CD4-positive, alpha-beta T cell (primary cell): ENCODE measurements at regions of chr7 and their contacts with region 1.

Region 1: GRCh38 chr7:157502701-157503111 is 165.9 kb downstream of the DNAJB6 start:
- DNase-seq: peak; percentile 50 to 95 (median 68)
- ATAC-seq: peak; percentile 93
- H3K4me3 ChIP-seq: peak overlapping the region; percentile 25
- H3K4me3 Mint-ChIP-seq: peak overlapping the region; percentile 87
- H3K27ac ChIP-seq: peak overlapping the region; percentile 55 to 73
- H3K27ac Mint-ChIP-seq: peak overlapping the region; percentile 86
- H3K4me1 ChIP-seq: peaks cover 29% of the 10 kb centered on the region
- H3K4me1 Mint-ChIP-seq: peaks cover 32% of the 10 kb centered on the region
- H3K27me3 ChIP-seq: peaks cover 0 to 2% of the 10 kb centered on the region in 2 experiments
- H3K27me3 Mint-ChIP-seq: no peaks in the 10 kb centered on the region
- CTCF ChIP-seq: no peak

Region 2: GRCh38 chr7:156975620-156976019 is 527.1 kb before region 1 on chr7:
- CTCF ChIA-PET with region 1: no interaction called
- POLR2A ChIA-PET with region 1: no interaction called
- intact Hi-C with region 1: no loop called
- DNase-seq: no peak
- ATAC-seq: no peak
- H3K4me3 ChIP-seq: no peak overlapping the region
- H3K4me3 Mint-ChIP-seq: no peak overlapping the region
- H3K27ac ChIP-seq: no peak overlapping the region
- H3K27ac Mint-ChIP-seq: no peak overlapping the region
- H3K4me1 ChIP-seq: no peaks in the 10 kb centered on the region
- H3K4me1 Mint-ChIP-seq: no peaks in the 10 kb centered on the region
- H3K27me3 ChIP-seq: no peaks in the 10 kb centered on the region
- H3K27me3 Mint-ChIP-seq: no peaks in the 10 kb centered on the region
- CTCF ChIP-seq: no peak

Region 3: GRCh38 chr7:157474689-157475088 is 28.0 kb before region 1 on chr7:
- CTCF ChIA-PET with region 1: no interaction called
- POLR2A ChIA-PET with region 1: interaction called, 18 read pairs
- intact Hi-C with region 1: loop called in 1 of 2 experiments (anchors 1 kb)
- DNase-seq: peak in 1 of 14 experiments; percentile 33
- ATAC-seq: no peak
- H3K4me3 ChIP-seq: no peak overlapping the region
- H3K4me3 Mint-ChIP-seq: no peak overlapping the region
- H3K27ac ChIP-seq: no peak overlapping the region
- H3K27ac Mint-ChIP-seq: peak overlapping the region; percentile 27
- H3K4me1 ChIP-seq: peaks cover 76% of the 10 kb centered on the region
- H3K4me1 Mint-ChIP-seq: peaks cover 65% of the 10 kb centered on the region
- H3K27me3 ChIP-seq: no peaks in the 10 kb centered on the region
- H3K27me3 Mint-ChIP-seq: no peaks in the 10 kb centered on the region
- CTCF ChIP-seq: peak; percentile 28

Region 4: GRCh38 chr7:157490457-157490912 is 12.2 kb before region 1 on chr7:
- CTCF ChIA-PET with region 1: interaction called, 3 read pairs
- POLR2A ChIA-PET with region 1: interaction called, 7 read pairs
- intact Hi-C with region 1: loop called in 1 of 2 experiments (anchors 1 kb)
- DNase-seq: peak in 9 of 14 experiments; percentile 27 to 89 (median 38)
- ATAC-seq: peak; percentile 93
- H3K4me3 ChIP-seq: no peak overlapping the region
- H3K4me3 Mint-ChIP-seq: peak overlapping the region; percentile 17
- H3K27ac ChIP-seq: no peak overlapping the region
- H3K27ac Mint-ChIP-seq: peak overlapping the region; percentile 68
- H3K4me1 ChIP-seq: peaks cover 26% of the 10 kb centered on the region
- H3K4me1 Mint-ChIP-seq: peaks cover 39% of the 10 kb centered on the region
- H3K27me3 ChIP-seq: no peaks in the 10 kb centered on the region
- H3K27me3 Mint-ChIP-seq: no peaks in the 10 kb centered on the region
- CTCF ChIP-seq: no peak

Region 5: DNA sequence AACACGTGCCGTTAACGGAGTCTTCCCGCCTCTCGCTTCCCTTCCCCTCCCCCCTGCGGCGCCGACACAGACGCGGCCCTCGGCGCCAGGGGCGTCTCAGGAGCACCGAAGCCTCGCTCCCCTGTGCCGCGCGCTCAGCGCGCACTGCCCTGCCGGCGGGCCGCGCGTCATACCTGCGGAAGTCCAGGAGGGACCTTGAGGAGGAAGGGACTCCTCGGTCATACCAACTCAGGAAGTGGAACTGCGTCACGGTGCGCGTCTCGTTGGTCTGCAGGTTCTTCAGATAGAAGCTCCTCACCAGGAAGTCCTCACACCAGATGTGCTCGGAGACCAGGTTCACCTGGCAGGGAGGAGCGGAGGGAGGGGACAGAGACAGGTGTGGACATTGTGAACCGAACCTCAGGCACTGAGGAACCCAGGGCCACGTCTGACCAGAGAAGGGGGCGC is 73.8 kb after region 1 on chr7:
- CTCF ChIA-PET with region 1: no interaction called
- POLR2A ChIA-PET with region 1: interaction called, 3 read pairs
- intact Hi-C with region 1: loop called in 1 of 2 experiments (anchors 10 kb)
- DNase-seq: peak; percentile 37 to 87 (median 58)
- ATAC-seq: peak; percentile 89
- H3K4me3 ChIP-seq: peak overlapping the region; percentile 48
- H3K4me3 Mint-ChIP-seq: peak overlapping the region; percentile 69
- H3K27ac ChIP-seq: peak overlapping the region in 1 of 2 donors; percentile 58
- H3K27ac Mint-ChIP-seq: peak overlapping the region; percentile 87
- H3K4me1 ChIP-seq: peaks cover 21% of the 10 kb centered on the region
- H3K4me1 Mint-ChIP-seq: peaks cover 28% of the 10 kb centered on the region
- H3K27me3 ChIP-seq: no peaks in the 10 kb centered on the region
- H3K27me3 Mint-ChIP-seq: no peaks in the 10 kb centered on the region
- CTCF ChIP-seq: no peak

Region 6: DNA sequence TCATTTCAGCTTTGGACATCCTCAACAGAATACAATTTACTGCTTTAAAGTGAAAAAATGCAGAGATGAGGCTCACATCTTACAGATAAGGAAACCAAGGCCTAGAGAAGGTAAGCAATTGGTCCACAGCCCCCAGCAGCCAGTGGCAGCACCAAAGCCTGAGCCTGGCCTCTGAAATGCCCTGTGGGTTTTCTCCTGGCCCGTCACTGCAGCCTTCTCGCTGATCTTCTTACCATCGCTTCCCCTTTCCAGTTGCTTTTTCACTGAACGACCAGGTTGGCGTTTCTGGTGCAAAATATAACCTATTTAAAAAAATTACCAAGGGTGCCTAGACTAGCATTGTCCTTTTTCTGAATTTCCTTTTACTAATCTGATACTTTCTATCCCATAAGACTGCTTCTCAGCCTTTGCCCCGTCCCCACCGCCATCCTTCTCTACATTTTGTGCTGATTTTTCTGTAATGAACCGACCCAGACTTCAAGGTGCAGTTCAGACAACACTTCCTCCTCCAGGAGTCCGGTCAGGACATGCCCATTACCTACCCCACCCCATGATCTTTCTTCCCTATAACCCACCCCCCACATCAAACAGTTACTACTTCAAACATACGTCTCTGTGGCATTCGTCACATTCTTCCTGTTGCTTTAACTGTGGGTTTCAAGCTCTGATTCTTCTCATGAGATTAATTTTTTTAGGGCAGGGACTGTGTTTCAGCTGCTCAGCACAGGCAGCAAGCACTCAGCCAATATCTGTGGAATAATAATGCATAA is 123.5 kb after region 1 on chr7:
- CTCF ChIA-PET with region 1: no interaction called
- POLR2A ChIA-PET with region 1: interaction called, 7 read pairs
- intact Hi-C with region 1: loop called (anchors 5 to 10 kb)
- DNase-seq: peak in 8 of 14 experiments; percentile 14 to 74 (median 42)
- ATAC-seq: peak; percentile 72
- H3K4me3 ChIP-seq: peak overlapping the region; percentile 19
- H3K4me3 Mint-ChIP-seq: peak overlapping the region; percentile 72
- H3K27ac ChIP-seq: no peak overlapping the region
- H3K27ac Mint-ChIP-seq: peak overlapping the region; percentile 68
- H3K4me1 ChIP-seq: peaks cover 57% of the 10 kb centered on the region
- H3K4me1 Mint-ChIP-seq: peaks cover 80% of the 10 kb centered on the region
- H3K27me3 ChIP-seq: peaks cover 0 to 3% of the 10 kb centered on the region in 2 experiments
- H3K27me3 Mint-ChIP-seq: no peaks in the 10 kb centered on the region
- CTCF ChIP-seq: no peak